Endothelial cell of umbilical vein (primary cell): ENCODE measurements at regions of chr12 and their contacts with region 1.

Region 1: DNA sequence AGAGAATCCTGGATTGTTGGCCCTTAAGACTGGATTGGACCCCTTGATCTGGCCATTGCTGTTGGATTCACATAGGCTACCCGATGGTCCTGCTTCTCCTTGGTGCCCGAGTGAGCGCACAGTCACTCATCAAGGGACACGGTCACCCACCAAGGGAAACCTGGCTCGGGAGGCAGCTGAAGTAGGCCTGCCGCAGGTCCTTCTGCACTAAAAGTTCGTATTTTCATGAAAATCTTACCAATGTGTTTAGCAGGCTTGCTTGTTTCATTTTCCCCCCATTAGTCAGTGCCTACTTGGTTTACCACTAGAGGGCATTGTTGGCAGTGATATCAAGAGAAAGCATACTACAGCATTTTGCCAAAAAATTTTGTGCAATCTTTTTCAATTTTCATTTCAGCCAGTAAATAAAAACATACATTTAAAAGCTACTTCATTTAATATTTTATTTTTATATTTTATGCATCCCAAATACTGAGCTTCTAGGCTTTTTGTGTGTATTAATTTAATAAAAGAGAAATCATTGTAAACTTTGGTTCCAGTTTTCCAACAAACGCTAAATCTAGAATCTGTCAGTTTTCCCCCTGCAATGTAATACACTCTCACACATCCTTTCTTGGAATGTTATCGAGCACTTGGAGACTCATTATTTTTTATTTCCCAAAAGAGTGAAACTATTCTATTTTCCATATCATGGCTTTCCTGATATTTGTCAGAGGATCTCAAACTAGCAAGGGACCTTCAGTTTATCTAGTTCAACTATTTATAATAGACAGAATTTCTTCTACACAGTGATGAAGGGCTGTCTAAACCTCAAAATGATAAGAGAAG is 116.7 kb downstream of the LMNTD1 start:
- DNase-seq: peak; percentile 75
- H3K4me3 ChIP-seq: no peak overlapping the region
- H3K27ac ChIP-seq: no peak overlapping the region
- H3K4me1 ChIP-seq: no peaks in the 10 kb centered on the region
- H3K27me3 ChIP-seq: no peaks in the 10 kb centered on the region
- CTCF ChIP-seq: peak; percentile 66 to 69
- POLR2A ChIP-seq: no peak

Region 2: GRCh38 chr12:25307818-25308217 is 128.6 kb before region 1 on chr12:
- CTCF ChIA-PET with region 1: no interaction called
- POLR2A ChIA-PET with region 1: no interaction called
- dilution Hi-C with region 1: no loop called
- intact Hi-C with region 1: no loop called
- DNase-seq: no peak
- H3K4me3 ChIP-seq: no peak overlapping the region
- H3K27ac ChIP-seq: no peak overlapping the region
- H3K4me1 ChIP-seq: no peaks in the 10 kb centered on the region
- H3K27me3 ChIP-seq: peaks cover 0 to 3% of the 10 kb centered on the region in 2 experiments
- CTCF ChIP-seq: no peak
- POLR2A ChIP-seq: no peak

Region 3: GRCh38 chr12:25458047-25458552 is 21.7 kb after region 1 on chr12:
- CTCF ChIA-PET with region 1: interaction called, 11 read pairs
- POLR2A ChIA-PET with region 1: no interaction called
- dilution Hi-C with region 1: no loop called
- intact Hi-C with region 1: no loop called
- DNase-seq: peak; percentile 91
- H3K4me3 ChIP-seq: no peak overlapping the region
- H3K27ac ChIP-seq: peak overlapping the region; percentile 32
- H3K4me1 ChIP-seq: peaks cover 19% of the 10 kb centered on the region
- H3K27me3 ChIP-seq: no peaks in the 10 kb centered on the region
- CTCF ChIP-seq: no peak
- POLR2A ChIP-seq: no peak

Region 4: GRCh38 chr12:25829192-25829591 is 392.8 kb after region 1 on chr12:
- CTCF ChIA-PET with region 1: interaction called, 4 read pairs
- POLR2A ChIA-PET with region 1: no interaction called
- dilution Hi-C with region 1: no loop called
- intact Hi-C with region 1: loop called (anchors 10 kb)
- DNase-seq: peak; percentile 97
- H3K4me3 ChIP-seq: no peak overlapping the region
- H3K27ac ChIP-seq: peak overlapping the region; percentile 80
- H3K4me1 ChIP-seq: peaks cover 15% of the 10 kb centered on the region
- H3K27me3 ChIP-seq: no peaks in the 10 kb centered on the region
- CTCF ChIP-seq: no peak
- POLR2A ChIP-seq: no peak

Region 5: GRCh38 chr12:26028953-26029735 is 592.7 kb after region 1 on chr12:
- CTCF ChIA-PET with region 1: interaction called, 47 read pairs
- POLR2A ChIA-PET with region 1: no interaction called
- dilution Hi-C with region 1: no loop called
- intact Hi-C with region 1: loop called (anchors 1 kb)
- DNase-seq: peak; percentile 78
- H3K4me3 ChIP-seq: no peak overlapping the region
- H3K27ac ChIP-seq: no peak overlapping the region
- H3K4me1 ChIP-seq: peaks cover 2% of the 10 kb centered on the region
- H3K27me3 ChIP-seq: no peaks in the 10 kb centered on the region
- CTCF ChIP-seq: peak; percentile 52 to 55
- POLR2A ChIP-seq: no peak